H1 (cell line): ENCODE measurements at regions of chr11 and their contacts with region 1.

Region 1: GRCh38 chr11:117210620-117211019 is 11.4 kb downstream of the TAGLN start:
- DNase-seq: no peak
- H3K4me3 ChIP-seq: no peak overlapping the region
- H3K27ac ChIP-seq: no peak overlapping the region
- H3K4me1 ChIP-seq: no peaks in the 10 kb centered on the region
- H3K27me3 ChIP-seq: no peaks in the 10 kb centered on the region
- CTCF ChIP-seq: no peak
- EP300 ChIP-seq: no peak
- POLR2A ChIP-seq: no peak
- RAD21 ChIP-seq: no peak

Region 2: DNA sequence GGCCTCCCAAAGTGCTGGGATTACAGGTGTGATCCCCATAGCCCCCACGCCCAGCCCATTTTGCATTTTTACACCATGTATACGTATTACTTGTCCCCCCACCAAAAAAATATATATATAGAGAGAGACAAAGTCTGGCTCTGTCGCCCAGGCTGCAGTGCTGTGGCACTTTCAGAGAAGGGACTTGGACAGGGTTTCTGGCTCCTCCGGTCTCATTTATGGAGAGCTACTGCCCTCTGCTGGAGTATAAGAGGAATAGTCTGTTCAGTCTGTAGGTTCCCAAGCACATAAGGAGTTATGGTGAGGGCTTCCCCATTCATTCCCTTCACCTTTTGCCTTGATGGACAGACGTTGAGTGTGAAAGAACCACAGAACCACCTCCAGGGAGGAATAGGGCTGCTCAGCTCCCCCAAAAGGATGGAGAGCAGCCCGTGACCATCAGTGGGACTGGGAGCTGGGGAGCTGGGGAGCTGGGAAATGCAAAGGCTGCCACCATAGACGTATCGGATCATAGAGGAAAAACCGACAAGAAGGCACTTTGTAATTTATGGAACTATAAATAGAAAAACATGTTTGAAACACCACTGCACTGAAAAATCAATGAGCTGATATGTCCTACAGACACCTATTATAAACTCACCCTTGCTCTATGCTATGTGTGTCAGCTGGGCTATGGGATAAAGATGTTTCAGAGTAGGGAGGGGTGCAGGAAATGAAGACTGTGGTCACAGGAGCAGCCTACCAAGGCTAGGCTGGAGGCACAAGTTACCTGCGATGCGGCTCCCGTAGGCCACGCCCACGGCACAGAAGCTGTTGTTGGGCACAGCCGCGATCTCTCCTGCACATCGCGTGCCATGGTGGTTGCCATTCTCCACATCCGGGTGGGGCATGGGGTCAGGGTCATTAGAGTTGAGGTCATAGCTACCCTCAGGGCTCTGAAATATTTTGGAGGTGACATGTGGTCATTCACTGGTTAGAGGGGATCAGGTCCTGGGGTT is 16.1 kb after region 1 on chr11:
- CTCF ChIA-PET with region 1: interaction called, 449 read pairs
- POLR2A ChIA-PET with region 1: interaction called, 17 read pairs
- DNase-seq: no peak
- H3K4me3 ChIP-seq: no peak overlapping the region
- H3K27ac ChIP-seq: no peak overlapping the region
- H3K4me1 ChIP-seq: peaks cover 0 to 6% (median under 1%) of the 10 kb centered on the region in 4 experiments; a peak in 2 of 7 replicates
- H3K27me3 ChIP-seq: no peaks in the 10 kb centered on the region
- CTCF ChIP-seq: peak; percentile 1 to 92 (median 78)
- EP300 ChIP-seq: no peak
- POLR2A ChIP-seq: no peak
- RAD21 ChIP-seq: peak; percentile 94